CD14-positive monocyte (primary cell): ENCODE measurements at regions of chr15 and their contacts with region 1.

Region 1: GRCh38 chr15:59688841-59689625 is at the start of gene BNIP2:
- DNase-seq: peak; percentile 97 to 99 (median 99)
- H3K4me3 ChIP-seq: peak within 1 kb of the TSS; percentile 69 to 98 (median 79)
- H3K4me3 Mint-ChIP-seq: peak within 1 kb of the TSS; percentile 94 to 95
- H3K27ac ChIP-seq: peak within 1 kb of the TSS; percentile 94 to 99
- H3K27ac Mint-ChIP-seq: peak within 1 kb of the TSS; percentile 99 to 100 (median 99)
- H3K4me1 ChIP-seq: peaks cover 42 to 53% of the 10 kb centered on the region in 2 donors
- H3K4me1 Mint-ChIP-seq: peaks cover 42% of the 10 kb centered on the region
- H3K27me3 ChIP-seq: no peaks in the 10 kb centered on the region
- H3K27me3 Mint-ChIP-seq: peaks cover 0 to 7% (median 0%) of the 10 kb centered on the region in 3 donors
- CTCF ChIP-seq: no peak
- polyA plus RNA-seq, gene BNIP2: 83.4 to 189 (median 136) TPM

Region 2: DNA sequence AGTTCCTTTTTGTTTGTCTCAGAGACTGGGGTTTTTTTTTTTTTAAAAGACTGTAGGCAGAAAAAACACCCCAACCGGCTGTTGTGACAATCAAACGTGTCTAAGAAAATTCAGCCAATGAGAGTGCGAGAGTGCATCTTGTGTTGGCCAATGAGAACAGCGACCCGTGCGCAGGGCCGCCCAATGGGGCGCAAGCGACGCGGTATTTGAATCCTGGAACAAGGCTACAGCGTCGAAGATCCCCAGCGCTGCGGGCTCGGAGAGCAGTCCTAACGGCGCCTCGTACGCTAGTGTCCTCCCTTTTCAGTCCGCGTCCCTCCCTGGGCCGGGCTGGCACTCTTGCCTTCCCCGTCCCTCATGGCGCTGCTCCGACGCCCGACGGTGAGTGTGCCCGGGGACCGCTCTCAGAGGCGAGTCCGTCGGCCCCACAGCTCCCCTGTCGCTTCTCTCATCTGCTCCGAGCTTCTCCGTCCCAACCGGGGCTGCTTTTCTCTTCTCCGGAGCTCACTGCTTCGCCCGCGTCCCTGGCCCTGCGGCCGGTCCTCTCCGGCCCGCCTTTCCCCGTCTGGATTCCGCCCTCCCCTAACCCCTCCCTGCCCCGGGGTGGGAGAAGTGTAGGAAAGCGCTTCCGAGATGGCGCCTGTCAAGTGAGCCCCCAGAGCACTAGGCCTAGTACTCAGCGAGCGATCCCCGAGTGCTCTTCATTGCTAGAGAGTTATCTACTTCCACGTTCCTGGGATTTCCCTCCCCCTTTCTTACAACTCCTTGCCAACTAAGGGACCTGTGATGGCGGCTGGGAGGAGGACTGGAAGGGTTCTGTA is 583.9 kb before region 1 on chr15 and contains the start of gene CCNB2:
- intact Hi-C with region 1: loop called in 1 of 2 experiments (anchors 10 kb)
- DNase-seq: peak; percentile 90 to 94 (median 93)
- H3K4me3 ChIP-seq: peak within 1 kb of the TSS; percentile 70 to 92 (median 89)
- H3K4me3 Mint-ChIP-seq: peak within 1 kb of the TSS; percentile 82 to 95
- H3K27ac ChIP-seq: peak within 1 kb of the TSS; percentile 71 to 94
- H3K27ac Mint-ChIP-seq: peak within 1 kb of the TSS; percentile 96 to 100 (median 99)
- H3K4me1 ChIP-seq: peaks cover 14 to 23% of the 10 kb centered on the region in 2 donors
- H3K4me1 Mint-ChIP-seq: peaks cover 20% of the 10 kb centered on the region
- H3K27me3 ChIP-seq: no peaks in the 10 kb centered on the region
- H3K27me3 Mint-ChIP-seq: no peaks in the 10 kb centered on the region
- CTCF ChIP-seq: no peak
- polyA plus RNA-seq, gene CCNB2: 0.13 to 0.53 (median 0.31) TPM

Region 3: DNA sequence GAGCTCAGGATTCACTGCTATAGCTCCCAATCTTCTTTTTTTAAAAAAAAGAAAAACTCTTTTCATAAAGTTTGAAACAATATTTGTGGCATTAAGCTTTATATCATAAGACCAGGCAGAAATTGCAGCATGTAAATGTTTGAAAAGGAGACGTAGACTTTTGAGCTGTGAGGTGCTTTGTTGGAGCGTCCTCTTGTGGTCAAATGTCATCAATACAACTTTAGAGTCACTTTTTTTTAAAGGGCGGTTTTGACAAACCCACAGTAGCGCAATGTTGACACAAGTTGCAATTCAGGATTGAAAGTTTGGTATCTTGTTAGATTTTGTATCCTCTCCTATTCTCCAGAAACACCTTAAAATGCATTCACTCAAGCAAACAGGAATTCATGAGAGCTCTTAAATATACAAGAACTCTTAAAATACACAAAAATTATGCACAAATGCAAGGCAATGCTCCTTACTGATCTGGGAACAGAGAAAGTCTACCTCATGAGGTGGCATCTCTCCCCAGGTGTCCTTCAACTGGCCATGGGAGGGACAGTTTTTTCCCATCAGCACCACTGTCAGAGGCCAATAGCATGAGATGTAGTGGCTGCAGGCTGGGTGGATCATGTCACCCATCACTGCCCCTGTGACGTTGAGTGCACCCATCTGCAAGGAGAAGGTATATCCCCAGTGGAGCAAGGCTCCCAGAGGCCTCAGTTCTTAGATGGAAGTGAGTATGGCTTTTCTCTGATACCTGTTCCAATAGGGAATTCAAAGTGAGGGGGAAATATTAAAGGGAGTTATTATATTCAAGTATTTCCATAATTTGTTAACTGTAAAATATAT is 638.0 kb after region 1 on chr15:
- intact Hi-C with region 1: loop called (anchors 5 to 10 kb)
- DNase-seq: peak in 2 of 3 donors; percentile 7 to 26
- H3K4me3 ChIP-seq: no peak overlapping the region
- H3K4me3 Mint-ChIP-seq: peak overlapping the region in 1 of 2 donors; percentile 23
- H3K27ac ChIP-seq: no peak overlapping the region
- H3K27ac Mint-ChIP-seq: no peak overlapping the region
- H3K4me1 ChIP-seq: no peaks in the 10 kb centered on the region
- H3K4me1 Mint-ChIP-seq: peaks cover 2% of the 10 kb centered on the region
- H3K27me3 ChIP-seq: peaks cover 8 to 12% of the 10 kb centered on the region in 2 donors
- H3K27me3 Mint-ChIP-seq: peaks cover 10 to 27% (median 11%) of the 10 kb centered on the region in 3 donors
- CTCF ChIP-seq: peak; percentile 75